ENCODE measurements at regions of chr10 and their contacts with region 1.

Region 1: DNA sequence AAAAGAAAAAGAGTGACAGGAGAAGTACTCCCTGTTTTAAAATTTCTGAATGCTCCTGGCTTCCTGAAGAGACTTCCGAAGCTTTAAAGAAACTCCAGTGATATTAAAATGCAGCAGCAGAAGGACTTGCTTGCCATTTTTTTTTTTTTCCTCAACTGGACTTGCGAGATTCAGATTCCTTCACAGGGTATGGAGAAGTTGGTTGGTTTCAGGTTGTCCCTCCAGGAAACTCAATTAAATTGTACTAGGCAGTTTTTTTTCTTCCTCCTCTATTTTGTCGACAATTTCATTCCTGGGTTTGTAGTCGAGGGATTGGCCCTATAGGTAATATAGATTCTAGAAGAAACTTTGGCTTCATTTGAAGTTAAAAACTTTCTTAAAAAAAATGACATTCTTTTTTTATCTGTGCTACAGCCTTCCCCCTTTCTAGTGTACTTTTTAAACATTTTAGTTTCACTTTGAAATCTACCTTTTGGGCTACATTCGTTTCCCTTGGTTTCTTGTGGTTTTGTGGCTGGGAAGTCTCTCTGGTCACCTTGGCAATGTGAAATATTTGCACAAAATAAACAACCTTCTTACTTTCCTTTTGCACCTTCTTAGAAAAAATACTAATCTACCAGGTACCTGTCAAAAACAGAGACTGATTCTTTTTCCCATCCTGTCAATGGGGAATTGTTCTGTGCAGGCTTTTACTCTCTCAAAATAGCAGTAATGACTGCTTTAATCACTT is 350.1 kb downstream of the GATA3 start:
- DNase-seq: peak; percentile 51
- H3K4me3 Mint-ChIP-seq: peak overlapping the region; percentile 65
- H3K27ac Mint-ChIP-seq: peak overlapping the region; percentile 64
- H3K4me1 Mint-ChIP-seq: peaks cover 80% of the 10 kb centered on the region
- H3K27me3 Mint-ChIP-seq: no peaks in the 10 kb centered on the region

Region 2: DNA sequence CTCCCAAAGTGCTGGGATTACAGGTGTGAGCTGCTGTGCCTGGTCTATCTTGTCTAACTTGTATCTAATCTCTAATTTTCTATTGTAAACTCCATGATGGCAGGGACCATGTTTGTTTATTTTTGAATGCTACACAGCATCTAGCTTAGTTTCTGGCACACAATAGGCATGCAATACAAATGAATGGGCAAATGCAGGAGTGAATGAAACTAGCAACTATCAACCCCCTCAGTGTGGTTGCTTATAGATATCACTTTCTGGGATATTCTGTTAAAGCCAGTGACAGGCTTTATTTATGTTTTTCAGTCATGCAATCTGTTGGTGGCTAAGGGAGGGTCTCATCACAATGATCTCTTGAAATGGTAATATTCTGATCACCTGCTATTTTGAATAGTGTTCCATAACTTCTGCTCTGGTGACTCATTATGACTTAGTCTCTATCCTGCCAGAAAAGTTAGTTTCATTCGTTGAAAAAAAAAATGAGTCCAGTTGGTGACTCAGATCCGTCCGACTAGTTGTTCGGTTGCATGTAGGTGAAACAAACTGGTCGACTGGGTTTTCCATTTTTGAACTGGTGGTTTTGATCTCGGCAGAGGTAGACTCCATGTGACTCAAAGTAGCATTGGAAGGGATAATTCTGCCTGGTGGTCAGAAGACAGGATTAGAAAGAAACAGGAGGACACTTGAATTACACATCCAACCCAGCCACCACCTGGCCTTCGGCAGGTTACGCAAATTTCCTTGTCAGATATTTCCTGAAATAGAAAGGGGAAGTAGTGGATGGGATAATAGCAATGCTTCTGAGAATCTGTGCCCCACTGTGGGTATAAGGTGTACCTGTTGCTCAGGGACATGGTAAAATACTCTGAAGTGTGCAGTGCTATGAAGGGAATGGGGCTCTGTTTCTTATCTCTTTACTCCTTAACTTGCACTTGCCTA is 273.3 kb before region 1 on chr10:
- CTCF ChIA-PET with region 1: no interaction called
- POLR2A ChIA-PET with region 1: interaction called, 4 read pairs
- intact Hi-C with region 1: loop called (anchors 1 kb)
- DNase-seq: peak; percentile 71
- H3K4me3 Mint-ChIP-seq: peak overlapping the region; percentile 38
- H3K27ac Mint-ChIP-seq: peak overlapping the region; percentile 50
- H3K4me1 Mint-ChIP-seq: peaks cover 42% of the 10 kb centered on the region
- H3K27me3 Mint-ChIP-seq: peaks cover 9% of the 10 kb centered on the region

Region 3: GRCh38 chr10:8254350-8254749 is 150.2 kb before region 1 on chr10:
- CTCF ChIA-PET with region 1: no interaction called
- POLR2A ChIA-PET with region 1: no interaction called
- intact Hi-C with region 1: loop called (anchors 1 kb)
- DNase-seq: peak; percentile 54
- H3K4me3 Mint-ChIP-seq: peak overlapping the region; percentile 53
- H3K27ac Mint-ChIP-seq: peak overlapping the region; percentile 68
- H3K4me1 Mint-ChIP-seq: peaks cover 23% of the 10 kb centered on the region
- H3K27me3 Mint-ChIP-seq: no peaks in the 10 kb centered on the region

Region 4: GRCh38 chr10:8331883-8332729 is 72.5 kb before region 1 on chr10:
- CTCF ChIA-PET with region 1: interaction called, 4 read pairs
- POLR2A ChIA-PET with region 1: interaction called, 9 read pairs
- intact Hi-C with region 1: loop called (anchors 1 kb)
- DNase-seq: peak; percentile 90
- H3K4me3 Mint-ChIP-seq: peak overlapping the region; percentile 72
- H3K27ac Mint-ChIP-seq: peak overlapping the region; percentile 79
- H3K4me1 Mint-ChIP-seq: peaks cover 72% of the 10 kb centered on the region
- H3K27me3 Mint-ChIP-seq: no peaks in the 10 kb centered on the region

Region 5: DNA sequence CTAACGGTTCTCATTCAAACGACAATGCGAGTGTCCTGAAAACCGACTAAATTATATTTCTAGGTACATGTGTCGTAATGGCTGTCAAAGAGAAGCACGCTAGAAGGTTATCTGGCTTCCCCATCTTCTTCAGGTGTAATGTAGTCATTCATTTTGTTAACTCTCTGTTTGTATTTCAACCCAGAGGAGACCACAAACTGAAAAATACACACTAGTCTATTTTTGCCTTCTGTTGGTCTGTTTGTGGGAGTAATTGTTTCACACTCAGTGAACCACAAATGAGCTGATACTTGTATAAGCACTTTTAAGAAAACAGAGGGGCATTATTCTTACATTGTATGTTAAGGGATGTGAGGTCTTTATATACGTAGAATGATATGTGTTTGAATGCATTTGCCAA is 44.2 kb before region 1 on chr10:
- CTCF ChIA-PET with region 1: no interaction called
- POLR2A ChIA-PET with region 1: interaction called, 4 read pairs
- intact Hi-C with region 1: loop called (anchors 2 kb)
- DNase-seq: no peak
- H3K4me3 Mint-ChIP-seq: no peak overlapping the region
- H3K27ac Mint-ChIP-seq: no peak overlapping the region
- H3K4me1 Mint-ChIP-seq: peaks cover 48% of the 10 kb centered on the region
- H3K27me3 Mint-ChIP-seq: no peaks in the 10 kb centered on the region

Region 6: GRCh38 chr10:8416192-8416701 is 11.7 kb after region 1 on chr10:
- CTCF ChIA-PET with region 1: interaction called, 4 read pairs
- POLR2A ChIA-PET with region 1: interaction called, 11 read pairs
- intact Hi-C with region 1: loop called (anchors 1 kb)
- DNase-seq: peak; percentile 56
- H3K4me3 Mint-ChIP-seq: no peak overlapping the region
- H3K27ac Mint-ChIP-seq: peak overlapping the region; percentile 72
- H3K4me1 Mint-ChIP-seq: peaks cover 24% of the 10 kb centered on the region
- H3K27me3 Mint-ChIP-seq: no peaks in the 10 kb centered on the region

Region 7: DNA sequence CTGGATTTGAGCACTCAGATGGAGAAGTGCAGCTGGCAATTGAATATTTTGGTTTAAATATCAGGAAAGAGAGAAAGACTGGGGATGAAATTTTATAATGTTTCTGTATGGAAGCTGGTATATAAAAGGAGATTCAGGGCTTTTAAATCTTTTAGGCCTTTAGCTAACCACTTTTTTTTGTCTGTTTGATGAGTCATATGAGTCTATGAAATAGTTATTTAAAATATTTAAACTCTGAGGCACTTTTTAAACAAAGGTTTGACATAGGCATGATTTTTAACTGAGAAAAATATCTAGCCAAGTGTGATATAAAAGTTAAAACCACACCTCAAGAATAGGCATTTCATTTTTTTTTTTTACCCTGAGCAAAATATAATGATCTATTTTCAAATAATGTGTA is 594.2 kb after region 1 on chr10:
- CTCF ChIA-PET with region 1: no interaction called
- POLR2A ChIA-PET with region 1: no interaction called
- intact Hi-C with region 1: loop called (anchors 10 kb)
- DNase-seq: no peak
- H3K4me3 Mint-ChIP-seq: no peak overlapping the region
- H3K27ac Mint-ChIP-seq: no peak overlapping the region
- H3K4me1 Mint-ChIP-seq: peaks cover 38% of the 10 kb centered on the region
- H3K27me3 Mint-ChIP-seq: no peaks in the 10 kb centered on the region

Measured in activated CD4-positive, alpha-beta memory T cell treated with anti-CD3 and anti-CD28 coated beads for 36 hours (primary cell).